ENCODE measurements at regions of chr9 and their contacts with region 1.

Region 1: DNA sequence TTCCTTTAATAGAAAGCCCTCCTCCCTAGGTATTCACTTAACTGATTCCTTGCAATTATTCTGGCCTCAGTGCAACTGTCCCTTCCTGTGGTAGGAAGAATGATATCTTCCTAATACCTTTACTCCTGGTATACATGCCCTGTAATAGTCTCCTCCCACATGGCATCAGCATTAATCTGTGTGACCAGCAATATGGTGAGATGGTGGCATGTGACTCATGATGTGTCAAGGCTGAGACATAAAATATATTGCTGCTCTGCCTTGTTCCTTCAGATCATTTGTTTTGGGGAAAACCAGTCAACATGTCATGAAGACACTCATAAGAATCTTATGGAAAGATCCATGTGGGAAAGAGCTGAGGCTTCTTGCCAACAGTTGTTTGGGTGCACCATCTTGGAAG is 149.1 kb upstream of the TRPM3 start:
- DNase-seq: no peak
- H3K4me3 Mint-ChIP-seq: no peak overlapping the region
- H3K27ac Mint-ChIP-seq: no peak overlapping the region
- H3K4me1 Mint-ChIP-seq: no peaks in the 10 kb centered on the region
- H3K27me3 Mint-ChIP-seq: peaks cover 52% of the 10 kb centered on the region
- CTCF ChIP-seq: no peak

Region 2: DNA sequence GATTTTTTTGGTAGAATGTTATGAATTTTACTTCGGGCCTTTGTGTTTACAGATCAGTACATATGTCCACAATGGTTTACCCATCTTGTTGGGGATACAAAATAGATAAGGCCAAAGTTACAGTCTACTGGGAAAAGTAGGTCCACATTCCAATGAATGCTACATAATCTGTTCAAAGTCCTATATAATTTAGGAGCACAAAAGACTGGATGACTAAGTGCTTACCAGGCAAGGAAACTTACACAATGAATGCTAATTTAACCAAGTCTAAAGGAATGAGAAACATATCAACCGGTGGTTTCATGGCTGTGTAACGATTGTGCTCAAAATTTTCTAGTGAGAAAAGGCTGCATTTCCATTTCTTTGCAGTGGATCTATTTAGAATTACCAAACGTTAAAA is 51.8 kb before region 1 on chr9:
- CTCF ChIA-PET with region 1: no interaction called
- intact Hi-C with region 1: loop called (anchors 10 kb)
- DNase-seq: no peak
- H3K4me3 Mint-ChIP-seq: no peak overlapping the region
- H3K27ac Mint-ChIP-seq: no peak overlapping the region
- H3K4me1 Mint-ChIP-seq: no peaks in the 10 kb centered on the region
- H3K27me3 Mint-ChIP-seq: no peaks in the 10 kb centered on the region
- CTCF ChIP-seq: no peak

Measured in Calu3 (cell line).